ENCODE measurements at regions of chr12 and their contacts with region 1.

Region 1: DNA sequence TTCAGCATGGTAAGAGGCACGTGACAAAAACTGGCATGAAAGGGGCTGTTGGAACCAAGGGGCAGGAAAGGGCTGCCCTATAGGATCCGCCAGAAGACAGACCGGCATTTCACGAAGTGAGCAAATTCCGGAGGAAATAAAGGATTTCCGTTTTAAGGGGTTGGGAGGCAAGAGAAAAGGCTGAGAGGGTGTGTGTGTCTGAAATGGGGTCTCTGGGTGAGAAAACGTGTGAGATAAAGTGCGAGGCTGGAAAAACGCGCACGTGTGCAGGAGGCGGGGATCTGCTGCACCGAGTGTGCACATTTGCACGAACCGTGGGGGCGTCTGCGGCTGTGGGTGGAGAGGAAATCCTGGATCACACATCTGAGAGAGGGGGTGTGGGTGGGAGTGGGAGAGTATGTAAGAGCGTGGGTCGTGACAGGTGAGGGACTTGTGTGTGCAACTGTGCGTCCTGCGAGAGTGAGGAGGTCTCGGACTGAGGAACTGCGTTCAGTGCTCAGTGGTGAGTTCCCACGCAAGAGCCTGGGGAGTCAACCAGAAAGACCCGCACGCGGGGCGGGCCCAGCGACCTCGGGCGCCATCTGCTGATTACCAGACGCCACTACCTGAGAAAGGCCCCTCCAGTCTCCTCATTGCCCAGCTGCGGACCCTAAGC is 37.0 kb upstream of the P2RX7 start:
- DNase-seq: peak; percentile 87
- ATAC-seq: peak; percentile 89
- H3K4me3 Mint-ChIP-seq: peak overlapping the region; percentile 77
- H3K27ac Mint-ChIP-seq: peak overlapping the region; percentile 81
- H3K4me1 Mint-ChIP-seq: peaks cover 44% of the 10 kb centered on the region
- H3K27me3 Mint-ChIP-seq: peaks cover 22% of the 10 kb centered on the region

Region 2: GRCh38 chr12:121005346-121005815 is 90.3 kb before region 1 on chr12:
- CTCF ChIA-PET with region 1: interaction called, 12 read pairs
- DNase-seq: peak; percentile 70
- ATAC-seq: peak; percentile 82
- H3K4me3 Mint-ChIP-seq: no peak overlapping the region
- H3K27ac Mint-ChIP-seq: peak overlapping the region; percentile 63
- H3K4me1 Mint-ChIP-seq: peaks cover 4% of the 10 kb centered on the region
- H3K27me3 Mint-ChIP-seq: no peaks in the 10 kb centered on the region

Region 3: DNA sequence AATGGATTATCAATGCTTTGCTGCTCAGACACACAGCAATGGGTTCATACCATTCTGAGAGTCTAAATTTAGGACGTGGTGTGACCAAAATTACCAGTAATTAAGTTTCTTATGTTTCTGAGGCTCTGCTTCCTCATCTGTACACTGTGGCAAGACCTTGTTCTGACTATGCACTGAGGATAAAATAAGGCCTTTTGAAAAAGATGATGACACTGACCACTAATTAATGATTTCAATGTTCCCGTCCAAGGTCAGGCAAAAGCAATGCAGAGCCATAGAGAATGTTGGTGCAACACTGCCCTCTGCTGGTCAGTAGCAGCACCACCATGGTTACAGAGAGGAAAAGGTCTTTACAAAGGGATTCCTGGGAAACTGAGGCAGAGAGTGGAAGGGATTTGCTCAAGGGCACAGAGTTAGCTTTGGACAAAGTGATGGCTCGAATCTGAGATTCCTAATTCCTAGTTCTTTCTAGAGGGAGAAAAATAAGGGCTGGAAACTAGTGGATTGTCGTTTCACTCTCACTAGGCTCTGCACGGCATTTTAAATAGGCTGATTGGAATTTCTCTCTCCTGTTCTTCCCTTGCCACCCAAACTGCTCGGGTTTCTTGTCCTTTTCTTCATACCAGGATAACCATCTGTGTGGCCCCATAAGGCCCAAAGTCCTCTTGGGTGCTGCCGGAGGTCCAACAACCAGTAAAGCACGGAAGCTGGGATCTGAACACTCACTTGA is 14.7 kb after region 1 on chr12:
- CTCF ChIA-PET with region 1: interaction called, 21 read pairs
- DNase-seq: peak; percentile 79
- ATAC-seq: peak; percentile 87
- H3K4me3 Mint-ChIP-seq: no peak overlapping the region
- H3K27ac Mint-ChIP-seq: peak overlapping the region; percentile 5
- H3K4me1 Mint-ChIP-seq: peaks cover 13% of the 10 kb centered on the region
- H3K27me3 Mint-ChIP-seq: no peaks in the 10 kb centered on the region

Measured in activated CD8-positive, alpha-beta memory T cell treated with anti-CD3 and anti-CD28 coated beads, Interleukin-2, amount 10 ng/mL, durations not matched to agents 7 days and 5 days (primary cell).